Activated T-helper 2 cell treated with anti-CD3 and anti-CD28 coated beads, Interferon-gamma antibody, Interleukin-2, Interleukin-4, amounts not matched to agents 10 μg/mL and 5 μg/mL and 100 μg/mL, durations not matched to agents 14 hours and 24 hours and 36 hours (primary cell): ENCODE measurements at regions of chr6 and their contacts with region 1.

Region 1: GRCh38 chr6:155418017-155418761 is 37.5 kb downstream of the NOX3 start:
- DNase-seq: peak; percentile 40
- H3K4me3 Mint-ChIP-seq: peak overlapping the region; percentile 61
- H3K27ac Mint-ChIP-seq: peak overlapping the region; percentile 96
- H3K4me1 Mint-ChIP-seq: peaks cover 45% of the 10 kb centered on the region
- H3K27me3 Mint-ChIP-seq: no peaks in the 10 kb centered on the region

Region 2: GRCh38 chr6:154247119-154247861 is 1170.9 kb before region 1 on chr6:
- intact Hi-C with region 1: loop called (anchors 5 kb)
- DNase-seq: no peak
- H3K4me3 Mint-ChIP-seq: peak overlapping the region; percentile 84
- H3K27ac Mint-ChIP-seq: peak overlapping the region; percentile 52
- H3K4me1 Mint-ChIP-seq: peaks cover 79% of the 10 kb centered on the region
- H3K27me3 Mint-ChIP-seq: peaks cover 27% of the 10 kb centered on the region

Region 3: DNA sequence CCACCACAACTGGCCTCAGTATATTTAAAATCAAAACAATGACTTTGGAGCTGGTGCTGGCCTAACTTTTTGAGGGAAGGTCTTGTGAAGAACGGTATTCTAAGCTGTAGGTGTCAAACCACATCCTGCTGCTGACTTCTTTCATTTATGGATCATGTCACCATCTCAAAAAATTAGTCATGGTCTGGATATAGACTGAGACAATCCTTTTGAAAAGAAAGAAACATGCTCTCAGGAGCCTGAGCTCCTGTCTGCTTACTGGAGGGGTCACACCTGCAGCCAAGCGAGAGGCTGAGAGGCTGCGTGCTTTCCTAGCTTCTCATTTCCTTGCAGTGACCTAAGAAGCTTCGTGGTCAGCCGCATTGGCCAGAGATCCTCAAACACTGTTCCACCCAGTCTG is 367.9 kb before region 1 on chr6:
- intact Hi-C with region 1: loop called (anchors 1 kb)
- DNase-seq: peak; percentile 22
- H3K4me3 Mint-ChIP-seq: peak overlapping the region; percentile 66
- H3K27ac Mint-ChIP-seq: peak overlapping the region; percentile 96
- H3K4me1 Mint-ChIP-seq: peaks cover 30% of the 10 kb centered on the region
- H3K27me3 Mint-ChIP-seq: no peaks in the 10 kb centered on the region

Region 4: DNA sequence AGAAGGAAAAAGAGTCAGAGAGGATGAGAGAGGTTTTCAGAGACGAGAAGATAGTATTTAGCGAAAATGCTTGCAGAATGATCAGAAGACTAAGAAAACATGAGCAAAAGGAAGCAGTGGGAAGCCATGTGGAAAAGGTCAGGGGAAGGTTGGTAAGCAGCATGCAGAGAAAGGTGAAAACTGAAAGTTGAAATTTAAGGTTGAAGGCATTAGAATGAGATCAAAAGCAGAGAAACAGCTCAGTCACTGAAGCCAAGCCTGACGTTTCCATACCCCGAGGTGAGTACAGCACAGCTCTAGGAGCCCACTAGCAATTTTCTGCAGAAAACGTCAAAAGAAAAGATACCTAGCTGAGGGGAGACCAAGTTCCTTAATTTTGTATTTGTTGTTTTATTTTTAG is 84.8 kb before region 1 on chr6:
- intact Hi-C with region 1: loop called (anchors 2 kb)
- DNase-seq: no peak
- H3K4me3 Mint-ChIP-seq: peak overlapping the region; percentile 19
- H3K27ac Mint-ChIP-seq: peak overlapping the region; percentile 76
- H3K4me1 Mint-ChIP-seq: peaks cover 35% of the 10 kb centered on the region
- H3K27me3 Mint-ChIP-seq: no peaks in the 10 kb centered on the region

Region 5: GRCh38 chr6:155493694-155494143 is 75.5 kb after region 1 on chr6:
- intact Hi-C with region 1: loop called (anchors 1 kb)
- DNase-seq: no peak
- H3K4me3 Mint-ChIP-seq: no peak overlapping the region
- H3K27ac Mint-ChIP-seq: no peak overlapping the region
- H3K4me1 Mint-ChIP-seq: peaks cover 8% of the 10 kb centered on the region
- H3K27me3 Mint-ChIP-seq: no peaks in the 10 kb centered on the region

Region 6: DNA sequence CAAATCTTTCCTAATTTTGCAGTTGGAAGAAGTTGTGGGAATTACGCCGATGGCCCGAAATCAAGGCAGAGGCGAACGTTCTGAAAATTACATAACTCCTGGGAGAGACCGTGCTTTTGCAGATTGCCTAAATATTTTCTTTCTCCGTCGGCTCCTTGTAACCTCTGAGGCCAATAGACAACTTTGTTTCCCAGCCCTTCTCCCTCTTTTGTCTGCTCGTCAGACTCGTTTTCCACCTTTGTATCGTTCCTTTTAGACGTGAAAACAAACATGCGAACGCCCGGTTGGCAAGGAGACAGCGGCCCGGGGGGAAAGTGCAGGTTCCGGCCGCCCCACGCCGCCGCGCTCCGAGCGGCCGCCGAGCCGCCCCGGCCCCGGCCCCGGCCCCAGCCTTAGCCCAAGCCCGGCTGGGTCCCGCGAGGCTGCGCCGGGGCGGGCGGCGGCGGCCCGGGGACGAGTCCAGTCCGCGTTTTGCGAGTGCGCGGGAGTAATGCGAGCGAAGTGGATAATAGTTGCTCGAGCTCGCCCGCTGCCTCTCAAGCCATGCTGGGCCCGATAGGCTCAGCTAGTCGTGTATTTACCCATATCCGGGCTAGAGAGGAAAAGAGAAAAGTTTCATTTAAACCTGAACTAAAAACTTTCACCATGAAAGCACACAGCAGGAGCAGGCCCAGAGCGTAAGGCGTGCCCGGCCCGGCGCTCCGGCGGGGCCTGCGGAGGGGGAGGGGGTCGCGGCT is 1358.8 kb after region 1 on chr6 and contains the start of gene ARID1B:
- intact Hi-C with region 1: loop called (anchors 10 kb)
- DNase-seq: peak; percentile 74
- H3K4me3 Mint-ChIP-seq: peak within 1 kb of the TSS; percentile 95
- H3K27ac Mint-ChIP-seq: peak within 1 kb of the TSS; percentile 97
- H3K4me1 Mint-ChIP-seq: peaks cover 33% of the 10 kb centered on the region
- H3K27me3 Mint-ChIP-seq: no peaks in the 10 kb centered on the region
- total RNA-seq, gene ARID1B: 65.6 and 66.3 TPM in 2 replicates